AG04450 (cell line): ENCODE measurements at regions of chrX and their contacts with region 1.

Region 1: DNA sequence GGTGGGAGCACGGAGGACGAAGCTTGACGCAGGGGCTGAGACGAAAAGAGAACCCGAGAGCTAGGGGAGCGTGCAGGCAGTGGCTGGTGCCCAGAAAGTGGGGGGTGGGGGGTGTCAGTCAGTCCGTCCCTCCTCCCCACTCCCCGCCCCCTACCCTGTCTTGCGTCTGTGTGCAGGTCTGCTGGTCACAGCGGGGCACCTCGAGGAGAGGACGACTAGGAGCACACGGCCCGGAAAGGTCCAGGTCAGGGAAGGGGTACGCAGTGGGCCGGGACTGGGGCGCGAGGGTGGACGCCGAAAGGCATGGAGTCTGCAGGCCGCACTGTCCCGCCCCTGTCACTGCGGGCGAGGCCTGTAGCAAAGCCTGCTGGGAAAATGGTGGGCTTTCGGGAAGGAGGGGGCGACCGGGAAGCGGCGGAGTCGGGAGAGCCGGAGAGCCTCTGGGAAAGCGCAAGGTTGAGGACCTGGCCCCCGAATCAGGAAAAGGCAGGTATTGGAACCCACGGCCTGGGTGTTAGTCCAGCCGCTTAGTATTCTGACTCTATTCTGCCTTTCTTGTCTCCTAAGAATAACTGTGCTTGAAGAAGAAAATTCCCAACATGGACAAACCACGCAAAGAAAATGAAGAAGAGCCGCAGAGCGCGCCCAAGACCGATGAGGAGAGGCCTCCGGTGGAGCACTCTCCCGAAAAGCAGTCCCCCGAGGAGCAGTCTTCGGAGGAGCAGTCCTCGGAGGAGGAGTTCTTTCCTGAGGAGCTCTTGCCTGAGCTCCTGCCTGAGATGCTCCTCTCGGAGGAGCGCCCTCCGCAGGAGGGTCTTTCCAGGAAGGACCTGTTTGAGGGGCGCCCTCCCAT is 769 bp downstream of the TCEAL1 start:
- DNase-seq: peak; percentile 20
- H3K4me3 ChIP-seq: peak overlapping the region; percentile 71
- H3K27ac ChIP-seq: peak overlapping the region; percentile 77
- H3K27me3 ChIP-seq: no peaks in the 10 kb centered on the region
- CTCF ChIP-seq: peak; percentile 64

Region 2: GRCh38 chrX:103533511-103534216 is 95.9 kb before region 1 on chrX:
- CTCF ChIA-PET with region 1: interaction called, 10 read pairs
- POLR2A ChIA-PET with region 1: interaction called, 4 read pairs
- DNase-seq: peak; percentile 38
- H3K4me3 ChIP-seq: no peak overlapping the region
- H3K27ac ChIP-seq: no peak overlapping the region
- H3K27me3 ChIP-seq: no peaks in the 10 kb centered on the region
- CTCF ChIP-seq: peak; percentile 69

Region 3: GRCh38 chrX:103640401-103641155 is 11.0 kb after region 1 on chrX:
- CTCF ChIA-PET with region 1: interaction called, 18 read pairs
- POLR2A ChIA-PET with region 1: interaction called, 4 read pairs
- DNase-seq: no peak
- H3K4me3 ChIP-seq: no peak overlapping the region
- H3K27ac ChIP-seq: no peak overlapping the region
- H3K27me3 ChIP-seq: no peaks in the 10 kb centered on the region
- CTCF ChIP-seq: no peak

Region 4: GRCh38 chrX:103656632-103657031 is 27.1 kb after region 1 on chrX:
- CTCF ChIA-PET with region 1: interaction called, 15 read pairs
- POLR2A ChIA-PET with region 1: no interaction called
- DNase-seq: no peak
- H3K4me3 ChIP-seq: no peak overlapping the region
- H3K27ac ChIP-seq: peak overlapping the region; percentile 61
- H3K27me3 ChIP-seq: no peaks in the 10 kb centered on the region
- CTCF ChIP-seq: no peak

Region 5: GRCh38 chrX:103686199-103687072 is 56.9 kb after region 1 on chrX and contains the start of gene MORF4L2:
- CTCF ChIA-PET with region 1: interaction called, 11 read pairs
- POLR2A ChIA-PET with region 1: interaction called, 3 read pairs
- DNase-seq: peak; percentile 97
- H3K4me3 ChIP-seq: peak within 1 kb of the TSS; percentile 81
- H3K27ac ChIP-seq: peak within 1 kb of the TSS; percentile 98
- H3K27me3 ChIP-seq: no peaks in the 10 kb centered on the region
- CTCF ChIP-seq: no peak
- polyA plus RNA-seq, gene MORF4L2: 452 and 562 TPM in 2 replicates

Region 6: GRCh38 chrX:103704863-103705262 is 75.3 kb after region 1 on chrX:
- CTCF ChIA-PET with region 1: no interaction called
- POLR2A ChIA-PET with region 1: no interaction called
- DNase-seq: no peak
- H3K4me3 ChIP-seq: no peak overlapping the region
- H3K27ac ChIP-seq: no peak overlapping the region
- H3K27me3 ChIP-seq: peaks cover 8% of the 10 kb centered on the region
- CTCF ChIP-seq: no peak